ENCODE measurements at regions of chr2 and their contacts with region 1.

Region 1: DNA sequence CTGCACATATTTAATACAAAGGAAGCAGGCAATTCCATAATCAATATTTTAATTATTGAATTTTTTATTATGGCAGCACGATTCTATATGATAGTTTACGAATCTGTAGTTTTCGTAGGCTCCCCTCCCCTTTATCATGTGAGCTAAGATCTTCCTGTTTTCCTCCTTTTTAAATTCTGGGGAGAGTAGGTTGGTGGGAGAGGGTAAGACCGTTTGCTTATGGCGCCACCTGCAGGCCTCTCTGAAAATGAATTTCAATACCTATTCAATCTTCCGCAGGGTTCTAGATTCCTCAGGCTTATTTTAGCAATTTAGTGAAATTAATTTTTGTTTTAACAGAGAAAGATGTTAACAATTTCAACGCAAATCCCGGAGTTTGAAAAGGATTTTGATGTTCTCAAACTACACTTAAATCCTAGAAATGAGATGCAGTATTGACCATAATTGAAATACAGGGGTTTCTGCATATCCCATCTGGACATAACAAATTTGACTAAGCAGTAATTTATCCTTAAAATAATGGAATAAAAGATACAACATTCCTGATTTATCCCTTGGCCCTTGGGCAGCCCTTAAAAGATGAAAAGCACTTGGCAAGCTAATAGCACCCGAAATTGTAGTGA is 12.8 kb upstream of the GBX2 start:
- DNase-seq: peak in 31 of 42 donors; percentile 23 to 88 (median 58)

Region 2: DNA sequence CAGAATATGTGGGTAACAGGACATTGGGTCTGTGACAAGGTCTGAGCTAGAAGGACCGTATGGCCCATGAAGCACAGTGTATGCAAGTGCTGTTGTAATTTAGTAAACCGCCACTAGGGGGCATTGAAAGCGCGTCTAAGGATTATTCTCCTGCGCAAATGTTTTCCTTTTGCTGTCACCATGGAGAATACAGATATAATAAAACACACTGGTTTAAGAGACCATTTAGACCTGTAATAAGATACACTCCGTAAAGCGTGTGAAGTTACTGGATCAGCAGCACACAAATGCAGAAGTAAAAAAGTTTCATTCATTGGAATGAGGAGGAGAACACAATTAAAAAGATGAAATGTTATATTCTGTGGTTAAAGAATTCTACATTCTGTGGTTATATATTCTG is 414.7 kb before region 1 on chr2:
- intact Hi-C with region 1: loop called (anchors 5 kb)
- DNase-seq: peak in 36 of 42 donors; percentile 32 to 94 (median 71)

Region 3: DNA sequence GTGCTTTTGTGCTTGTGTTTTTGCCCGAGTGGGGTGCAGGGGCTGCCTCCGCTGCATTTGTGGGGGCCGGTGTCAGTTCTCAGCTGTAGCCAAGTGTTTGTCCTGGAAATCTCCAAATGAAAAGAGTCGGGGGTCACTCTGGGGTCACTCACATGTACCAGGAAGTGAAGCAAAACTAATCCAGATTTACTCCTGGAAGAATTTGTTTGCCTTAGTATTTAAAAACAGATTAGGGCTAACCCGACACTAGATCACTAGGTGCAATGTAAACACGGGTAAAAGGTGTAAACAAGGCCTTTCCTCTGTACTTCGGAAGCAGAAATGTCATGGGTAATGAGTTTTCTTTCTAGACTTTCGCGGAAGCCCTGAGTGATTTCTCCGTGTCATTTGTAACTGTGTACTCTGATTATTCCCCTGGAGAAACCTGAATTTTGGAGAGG is 63.1 kb before region 1 on chr2:
- intact Hi-C with region 1: no loop called
- DNase-seq: no peak